Caco-2 (cell line): ENCODE measurements at regions of chrX and their contacts with region 1.

Region 1: DNA sequence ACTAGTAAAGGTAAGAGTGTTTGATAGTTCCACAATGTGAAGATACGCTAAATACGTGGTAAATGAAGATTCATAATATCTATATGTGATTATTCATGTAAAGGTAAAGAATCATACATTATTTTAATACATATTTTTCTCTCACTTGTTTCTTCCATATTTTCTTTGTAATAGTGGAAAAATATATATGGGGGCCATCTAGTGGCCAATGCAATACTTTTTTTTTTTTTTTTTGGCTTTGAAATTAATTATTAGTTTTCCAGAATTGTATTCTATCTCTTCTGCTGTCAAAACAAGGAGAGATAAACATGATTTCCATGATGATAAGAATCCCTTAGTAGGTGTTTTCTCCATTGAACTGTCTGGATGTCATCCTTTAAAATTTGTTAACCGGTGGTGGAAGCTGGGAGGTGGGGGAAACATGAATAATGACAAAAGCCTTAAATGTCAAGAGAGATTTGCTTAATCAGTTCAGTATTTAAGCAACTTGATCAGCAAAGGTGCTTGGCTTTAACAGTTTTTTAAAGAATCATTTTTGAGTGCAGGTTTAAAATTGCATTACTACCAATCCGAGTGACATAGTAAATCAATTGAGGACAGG is 508.7 kb upstream of the HTR2C start:
- DNase-seq: no peak
- H3K4me3 ChIP-seq: no peak overlapping the region
- H3K4me3 Mint-ChIP-seq: no peak overlapping the region
- H3K27ac Mint-ChIP-seq: no peak overlapping the region
- H3K4me1 ChIP-seq: no peaks in the 10 kb centered on the region
- H3K4me1 Mint-ChIP-seq: no peaks in the 10 kb centered on the region
- H3K27me3 ChIP-seq: no peaks in the 10 kb centered on the region
- H3K27me3 Mint-ChIP-seq: no peaks in the 10 kb centered on the region
- CTCF ChIP-seq: peak; percentile 26 to 27

Region 2: DNA sequence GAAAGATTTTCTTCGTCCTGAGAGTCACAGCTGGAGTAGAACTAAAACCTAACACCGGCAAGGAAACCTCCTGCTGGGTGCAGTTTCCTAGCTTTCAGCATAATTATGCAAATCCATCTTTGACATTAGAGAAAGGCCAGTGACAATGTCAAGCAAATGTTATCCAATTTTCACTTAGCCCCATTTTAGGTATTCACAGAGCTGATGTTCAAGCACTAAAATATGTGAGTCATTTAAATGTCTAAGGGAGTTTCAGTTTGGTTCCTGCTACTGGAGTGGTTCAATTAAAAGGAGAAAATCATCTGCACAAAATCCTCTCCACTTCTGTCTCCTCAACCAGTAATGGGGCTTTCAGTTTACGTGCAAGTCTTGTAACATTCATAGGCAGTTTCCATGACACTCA is 1197.4 kb before region 1 on chrX:
- CTCF ChIA-PET with region 1: no interaction called
- POLR2A ChIA-PET with region 1: no interaction called
- intact Hi-C with region 1: no loop called
- DNase-seq: no peak
- H3K4me3 ChIP-seq: no peak overlapping the region
- H3K4me3 Mint-ChIP-seq: no peak overlapping the region
- H3K27ac Mint-ChIP-seq: no peak overlapping the region
- H3K4me1 ChIP-seq: 0 out of 2 replicates have a peak, but pooled peaks cover 5% of the 10 kb centered on the region
- H3K4me1 Mint-ChIP-seq: no peaks in the 10 kb centered on the region
- H3K27me3 ChIP-seq: no peaks in the 10 kb centered on the region
- H3K27me3 Mint-ChIP-seq: no peaks in the 10 kb centered on the region
- CTCF ChIP-seq: no peak

Region 3: GRCh38 chrX:113947548-113947947 is 127.6 kb before region 1 on chrX:
- CTCF ChIA-PET with region 1: no interaction called
- POLR2A ChIA-PET with region 1: no interaction called
- intact Hi-C with region 1: loop called (anchors 2 kb)
- DNase-seq: no peak
- H3K4me3 ChIP-seq: no peak overlapping the region
- H3K4me3 Mint-ChIP-seq: no peak overlapping the region
- H3K27ac Mint-ChIP-seq: no peak overlapping the region
- H3K4me1 ChIP-seq: no peaks in the 10 kb centered on the region
- H3K4me1 Mint-ChIP-seq: no peaks in the 10 kb centered on the region
- H3K27me3 ChIP-seq: no peaks in the 10 kb centered on the region
- H3K27me3 Mint-ChIP-seq: no peaks in the 10 kb centered on the region
- CTCF ChIP-seq: peak in 1 of 2 experiments; percentile 18

Region 4: DNA sequence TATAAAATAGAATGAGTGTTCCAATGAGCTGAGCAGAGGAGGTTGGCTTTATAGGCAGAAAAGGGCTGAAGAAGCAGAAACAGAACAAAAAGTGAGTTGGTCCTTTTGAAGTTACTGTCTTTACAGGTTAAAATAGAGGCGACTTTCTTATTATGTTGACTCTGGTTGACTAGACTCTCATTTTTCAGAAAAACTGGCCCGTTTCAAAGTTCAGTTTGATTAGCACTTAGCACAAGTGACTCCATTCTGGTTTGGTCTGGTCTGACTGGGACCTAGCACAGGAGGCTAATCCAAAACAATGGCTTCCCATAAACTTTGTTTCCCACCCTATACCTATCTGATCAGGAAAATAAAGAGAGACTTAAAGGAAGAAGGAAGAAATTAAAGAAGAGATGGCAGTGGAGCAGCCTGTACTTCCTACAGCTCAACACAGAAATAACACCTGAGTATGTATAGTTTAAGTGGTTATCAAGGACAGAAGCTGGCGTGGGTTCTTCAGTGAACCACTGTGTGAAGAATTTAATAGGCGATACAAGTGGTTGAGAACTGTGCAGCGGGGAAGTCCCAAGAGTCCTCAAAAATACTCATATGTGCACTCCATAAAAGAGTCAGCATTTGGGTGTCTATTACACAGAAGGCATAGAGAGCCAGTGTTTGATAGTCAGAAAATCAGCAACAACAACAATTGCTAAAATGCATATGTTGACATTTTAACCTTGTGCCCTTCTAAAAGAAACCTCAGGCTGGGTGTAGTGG is 46.1 kb before region 1 on chrX:
- CTCF ChIA-PET with region 1: no interaction called
- POLR2A ChIA-PET with region 1: no interaction called
- intact Hi-C with region 1: no loop called
- DNase-seq: no peak
- H3K4me3 ChIP-seq: no peak overlapping the region
- H3K4me3 Mint-ChIP-seq: no peak overlapping the region
- H3K27ac Mint-ChIP-seq: no peak overlapping the region
- H3K4me1 ChIP-seq: no peaks in the 10 kb centered on the region
- H3K4me1 Mint-ChIP-seq: no peaks in the 10 kb centered on the region
- H3K27me3 ChIP-seq: no peaks in the 10 kb centered on the region
- H3K27me3 Mint-ChIP-seq: no peaks in the 10 kb centered on the region
- CTCF ChIP-seq: no peak

Region 5: GRCh38 chrX:114181195-114181594 is 106.0 kb after region 1 on chrX:
- CTCF ChIA-PET with region 1: no interaction called
- POLR2A ChIA-PET with region 1: no interaction called
- intact Hi-C with region 1: no loop called
- DNase-seq: no peak
- H3K4me3 ChIP-seq: no peak overlapping the region
- H3K4me3 Mint-ChIP-seq: no peak overlapping the region
- H3K27ac Mint-ChIP-seq: no peak overlapping the region
- H3K4me1 ChIP-seq: no peaks in the 10 kb centered on the region
- H3K4me1 Mint-ChIP-seq: no peaks in the 10 kb centered on the region
- H3K27me3 ChIP-seq: no peaks in the 10 kb centered on the region
- H3K27me3 Mint-ChIP-seq: no peaks in the 10 kb centered on the region
- CTCF ChIP-seq: no peak